ENCODE measurements at regions of chr15 and their contacts with region 1.

Region 1: DNA sequence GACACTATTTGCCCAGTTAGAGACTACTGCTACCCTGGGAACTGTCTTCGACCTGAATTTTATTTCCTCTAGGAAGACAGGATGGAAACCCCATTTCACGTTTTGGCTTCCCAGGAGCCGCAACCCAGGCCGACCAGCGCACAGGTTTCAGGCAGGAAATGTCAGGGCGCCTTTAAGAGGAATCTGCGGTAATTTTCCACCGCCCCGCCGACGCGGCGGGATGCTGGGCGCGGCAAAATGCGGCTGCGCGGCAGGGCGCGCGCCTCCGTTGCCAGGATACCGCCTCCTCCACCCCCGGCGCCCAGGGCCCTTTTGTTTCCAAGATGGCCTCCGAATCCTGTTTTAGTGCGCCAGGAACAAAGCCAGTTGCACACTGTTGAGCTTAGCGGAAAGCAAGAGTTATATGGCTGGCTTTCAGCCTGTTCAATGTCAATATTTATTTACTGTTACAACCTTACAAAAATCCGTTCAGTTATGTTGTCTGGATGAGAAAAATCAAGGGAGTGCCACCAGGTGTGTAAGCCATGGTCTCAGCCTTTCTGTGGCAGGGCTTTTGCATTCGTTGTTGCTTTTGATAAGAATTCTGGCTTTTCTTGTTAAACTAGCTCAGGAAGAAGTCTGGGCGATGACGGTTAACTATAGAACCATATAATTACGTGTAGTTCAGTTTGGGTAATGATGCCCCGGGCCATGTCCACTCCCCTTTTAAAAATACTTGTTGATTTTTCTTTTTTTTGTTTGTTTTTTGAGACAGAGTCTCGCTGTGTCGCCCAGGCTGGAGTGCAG is 79.7 kb upstream of the CHD2 start:
- DNase-seq: peak; percentile 87 to 89 (median 88)
- H3K4me3 ChIP-seq: peak overlapping the region; percentile 79 to 86
- H3K4me3 Mint-ChIP-seq: peak overlapping the region; percentile 74 to 93 (median 91)
- H3K27ac ChIP-seq: peak overlapping the region; percentile 74
- H3K27ac Mint-ChIP-seq: peak overlapping the region; percentile 97 to 99 (median 99)
- H3K4me1 ChIP-seq: peaks cover 67% of the 10 kb centered on the region
- H3K4me1 Mint-ChIP-seq: peaks cover 40 to 65% (median 54%) of the 10 kb centered on the region in 4 donors
- H3K27me3 ChIP-seq: no peaks in the 10 kb centered on the region
- H3K27me3 Mint-ChIP-seq: no peaks in the 10 kb centered on the region

Region 2: GRCh38 chr15:92845126-92845508 is 24.7 kb after region 1 on chr15:
- CTCF ChIA-PET with region 1: interaction called, 3 read pairs
- POLR2A ChIA-PET with region 1: interaction called, 18 read pairs
- intact Hi-C with region 1: loop called (anchors 1 kb)
- DNase-seq: peak in 4 of 5 donors; percentile 57 to 71 (median 66)
- H3K4me3 ChIP-seq: peak overlapping the region; percentile 21 to 25
- H3K4me3 Mint-ChIP-seq: peak overlapping the region; percentile 73 to 94 (median 86)
- H3K27ac ChIP-seq: peak overlapping the region; percentile 44
- H3K27ac Mint-ChIP-seq: peak overlapping the region; percentile 73 to 99 (median 98)
- H3K4me1 ChIP-seq: peaks cover 80% of the 10 kb centered on the region
- H3K4me1 Mint-ChIP-seq: peaks cover 36 to 86% (median 67%) of the 10 kb centered on the region in 4 donors
- H3K27me3 ChIP-seq: no peaks in the 10 kb centered on the region
- H3K27me3 Mint-ChIP-seq: no peaks in the 10 kb centered on the region

Region 3: GRCh38 chr15:92889390-92890107 is 69.1 kb after region 1 on chr15:
- CTCF ChIA-PET with region 1: interaction called, 25 read pairs
- POLR2A ChIA-PET with region 1: interaction called, 444 read pairs
- intact Hi-C with region 1: no loop called
- DNase-seq: no peak
- H3K4me3 ChIP-seq: peak overlapping the region in 1 of 2 donors; percentile 40
- H3K4me3 Mint-ChIP-seq: peak overlapping the region; percentile 56 to 88 (median 82)
- H3K27ac ChIP-seq: peak overlapping the region; percentile 17
- H3K27ac Mint-ChIP-seq: peak overlapping the region; percentile 74 to 98 (median 88)
- H3K4me1 ChIP-seq: peaks cover 92% of the 10 kb centered on the region
- H3K4me1 Mint-ChIP-seq: peaks cover 48 to 86% (median 58%) of the 10 kb centered on the region in 4 donors
- H3K27me3 ChIP-seq: no peaks in the 10 kb centered on the region
- H3K27me3 Mint-ChIP-seq: no peaks in the 10 kb centered on the region

Region 4: GRCh38 chr15:93562395-93563123 is 742.1 kb after region 1 on chr15:
- CTCF ChIA-PET with region 1: no interaction called
- POLR2A ChIA-PET with region 1: no interaction called
- intact Hi-C with region 1: no loop called
- DNase-seq: no peak
- H3K4me3 ChIP-seq: no peak overlapping the region
- H3K4me3 Mint-ChIP-seq: no peak overlapping the region
- H3K27ac ChIP-seq: no peak overlapping the region
- H3K27ac Mint-ChIP-seq: no peak overlapping the region
- H3K4me1 ChIP-seq: no peaks in the 10 kb centered on the region
- H3K4me1 Mint-ChIP-seq: no peaks in the 10 kb centered on the region
- H3K27me3 ChIP-seq: no peaks in the 10 kb centered on the region
- H3K27me3 Mint-ChIP-seq: peaks cover 3 to 4% of the 10 kb centered on the region in 2 donors